ENCODE measurements at regions of chr22 and their contacts with region 1.

Region 1: DNA sequence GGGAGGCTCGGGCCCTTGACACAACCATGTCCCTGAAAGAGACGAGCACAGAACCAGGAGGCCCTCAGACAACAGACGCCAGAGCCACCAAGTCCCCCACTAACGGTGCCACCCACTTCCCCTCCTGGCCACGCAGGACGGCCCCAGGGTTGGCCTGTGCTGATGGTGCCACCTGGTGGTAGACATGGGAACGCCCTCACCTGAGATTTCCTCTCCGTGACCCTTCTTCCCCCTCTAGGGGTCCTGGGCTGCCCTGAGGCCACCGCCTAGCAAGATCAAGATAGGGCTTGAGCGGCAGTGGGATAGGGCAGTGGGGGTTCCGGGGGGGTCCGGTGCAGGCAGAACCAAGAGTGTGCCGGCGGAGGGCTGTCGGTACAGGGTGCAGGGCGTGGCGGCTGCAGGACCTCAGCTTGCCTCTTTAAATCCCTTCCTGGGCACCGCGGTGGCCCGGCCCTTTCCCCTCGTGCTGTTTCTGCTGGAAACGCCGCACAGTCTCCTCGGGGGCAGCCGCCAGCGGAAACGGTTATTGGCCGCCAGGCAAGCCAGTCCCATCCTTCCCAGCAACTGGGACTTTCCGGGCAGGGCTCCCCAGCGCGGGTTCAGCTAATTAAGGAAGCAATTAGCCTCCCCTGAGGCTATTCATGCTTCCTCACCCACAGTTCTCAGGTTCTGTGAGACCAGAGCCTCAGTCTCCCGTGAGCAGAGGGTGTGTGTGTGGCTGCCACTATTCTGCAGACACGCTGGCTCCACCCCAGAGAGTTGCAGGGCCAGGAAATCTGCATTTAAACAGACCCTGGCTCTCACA is 5.5 kb upstream of the NFAM1 start:
- DNase-seq: peak; percentile 76 to 87
- H3K4me3 ChIP-seq: peak overlapping the region; percentile 42
- H3K4me3 Mint-ChIP-seq: peak overlapping the region; percentile 71
- H3K27ac Mint-ChIP-seq: peak overlapping the region; percentile 53
- H3K4me1 ChIP-seq: no peaks in the 10 kb centered on the region
- H3K4me1 Mint-ChIP-seq: no peaks in the 10 kb centered on the region
- H3K27me3 ChIP-seq: no peaks in the 10 kb centered on the region
- H3K27me3 Mint-ChIP-seq: no peaks in the 10 kb centered on the region
- CTCF ChIP-seq: peak; percentile 95

Region 2: DNA sequence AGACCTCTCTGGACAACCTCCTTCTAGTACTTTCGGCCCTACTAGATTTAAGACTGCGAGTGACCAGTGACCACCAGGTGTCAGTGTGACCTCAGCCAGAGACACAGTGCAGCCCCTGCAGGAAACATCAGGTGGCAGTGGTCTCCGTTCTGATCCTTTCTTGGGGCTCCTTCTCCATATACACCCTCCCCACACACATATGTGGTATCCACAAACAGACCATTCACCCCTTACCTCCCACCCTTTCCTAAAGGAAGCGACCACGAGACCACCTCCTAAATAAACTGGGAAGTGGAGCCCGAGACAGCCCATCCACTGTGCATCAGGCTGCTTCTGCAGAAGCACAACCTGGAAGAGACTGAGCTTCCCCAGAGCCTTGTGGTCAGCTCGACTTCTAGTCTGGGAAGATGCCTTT is 268.6 kb before region 1 on chr22:
- CTCF ChIA-PET with region 1: no interaction called
- POLR2A ChIA-PET with region 1: no interaction called
- intact Hi-C with region 1: loop called (anchors 1 kb)
- DNase-seq: peak; percentile 77 to 82
- H3K4me3 ChIP-seq: no peak overlapping the region
- H3K4me3 Mint-ChIP-seq: no peak overlapping the region
- H3K27ac Mint-ChIP-seq: no peak overlapping the region
- H3K4me1 ChIP-seq: no peaks in the 10 kb centered on the region
- H3K4me1 Mint-ChIP-seq: no peaks in the 10 kb centered on the region
- H3K27me3 ChIP-seq: no peaks in the 10 kb centered on the region
- H3K27me3 Mint-ChIP-seq: no peaks in the 10 kb centered on the region
- CTCF ChIP-seq: peak; percentile 97 to 99

Region 3: DNA sequence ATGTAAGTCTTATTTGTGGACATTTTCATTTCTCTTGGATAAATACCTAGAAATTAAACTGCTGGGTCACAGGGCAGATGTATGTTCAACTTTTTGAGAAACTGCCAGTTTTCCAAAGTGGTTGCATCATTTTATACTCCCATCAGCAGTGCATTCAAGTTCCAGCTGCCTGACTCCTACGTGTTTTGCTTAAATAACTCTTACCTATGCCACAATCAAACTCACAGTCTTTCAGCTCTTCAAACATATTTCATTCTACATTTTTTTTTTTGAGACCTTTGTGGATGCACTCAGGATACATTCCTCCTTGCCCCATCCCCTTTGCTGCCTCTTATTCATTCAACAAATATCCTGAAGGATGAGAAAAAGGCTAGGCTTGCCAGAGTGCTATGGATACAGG is 176.4 kb before region 1 on chr22:
- CTCF ChIA-PET with region 1: no interaction called
- POLR2A ChIA-PET with region 1: no interaction called
- intact Hi-C with region 1: no loop called
- DNase-seq: no peak
- H3K4me3 ChIP-seq: no peak overlapping the region
- H3K4me3 Mint-ChIP-seq: no peak overlapping the region
- H3K27ac Mint-ChIP-seq: no peak overlapping the region
- H3K4me1 ChIP-seq: peaks cover 3% of the 10 kb centered on the region; the same call in 1 of the 2 replicates
- H3K4me1 Mint-ChIP-seq: peaks cover 35% of the 10 kb centered on the region
- H3K27me3 ChIP-seq: no peaks in the 10 kb centered on the region
- H3K27me3 Mint-ChIP-seq: no peaks in the 10 kb centered on the region
- CTCF ChIP-seq: no peak

Region 4: GRCh38 chr22:42277988-42278776 is 159.5 kb before region 1 on chr22:
- CTCF ChIA-PET with region 1: interaction called, 3 read pairs
- POLR2A ChIA-PET with region 1: no interaction called
- intact Hi-C with region 1: loop called (anchors 1 kb)
- DNase-seq: peak; percentile 75 to 78
- H3K4me3 ChIP-seq: no peak overlapping the region
- H3K4me3 Mint-ChIP-seq: no peak overlapping the region
- H3K27ac Mint-ChIP-seq: peak overlapping the region; percentile 55
- H3K4me1 ChIP-seq: peaks cover 52% of the 10 kb centered on the region
- H3K4me1 Mint-ChIP-seq: peaks cover 38% of the 10 kb centered on the region
- H3K27me3 ChIP-seq: no peaks in the 10 kb centered on the region
- H3K27me3 Mint-ChIP-seq: no peaks in the 10 kb centered on the region
- CTCF ChIP-seq: peak in 1 of 2 experiments; percentile 62

Region 5: GRCh38 chr22:42313804-42314581 is 123.7 kb before region 1 on chr22:
- CTCF ChIA-PET with region 1: interaction called, 7 read pairs
- POLR2A ChIA-PET with region 1: no interaction called
- intact Hi-C with region 1: loop called (anchors 1 kb)
- DNase-seq: peak; percentile 94 to 98
- H3K4me3 ChIP-seq: no peak overlapping the region
- H3K4me3 Mint-ChIP-seq: peak overlapping the region; percentile 52
- H3K27ac Mint-ChIP-seq: peak overlapping the region; percentile 95
- H3K4me1 ChIP-seq: peaks cover 61% of the 10 kb centered on the region
- H3K4me1 Mint-ChIP-seq: peaks cover 42% of the 10 kb centered on the region
- H3K27me3 ChIP-seq: no peaks in the 10 kb centered on the region
- H3K27me3 Mint-ChIP-seq: no peaks in the 10 kb centered on the region
- CTCF ChIP-seq: peak; percentile 67 to 91

Region 6: DNA sequence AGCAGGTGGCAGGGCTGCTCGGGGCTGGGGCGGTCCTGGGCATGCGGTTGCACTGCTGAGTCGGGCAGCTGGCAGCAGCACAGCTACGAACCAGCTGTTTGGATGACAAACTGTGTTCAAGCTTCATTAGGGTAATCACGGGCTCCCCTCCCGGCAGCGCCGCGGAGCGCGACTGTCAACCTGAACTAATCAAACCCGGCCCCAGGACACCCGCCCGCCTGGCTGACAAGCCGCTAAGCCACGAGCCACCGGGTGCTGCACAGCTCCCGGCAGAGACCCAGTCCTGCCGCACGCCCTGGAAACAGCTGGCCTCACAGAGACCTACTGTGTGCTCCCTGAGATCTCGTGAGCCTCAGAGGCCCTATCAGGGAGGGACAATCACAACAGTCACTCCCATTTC is 106.7 kb before region 1 on chr22:
- CTCF ChIA-PET with region 1: no interaction called
- POLR2A ChIA-PET with region 1: no interaction called
- intact Hi-C with region 1: no loop called
- DNase-seq: no peak
- H3K4me3 ChIP-seq: no peak overlapping the region
- H3K4me3 Mint-ChIP-seq: no peak overlapping the region
- H3K27ac Mint-ChIP-seq: no peak overlapping the region
- H3K4me1 ChIP-seq: no peaks in the 10 kb centered on the region
- H3K4me1 Mint-ChIP-seq: no peaks in the 10 kb centered on the region
- H3K27me3 ChIP-seq: no peaks in the 10 kb centered on the region
- H3K27me3 Mint-ChIP-seq: no peaks in the 10 kb centered on the region
- CTCF ChIP-seq: no peak

Region 7: DNA sequence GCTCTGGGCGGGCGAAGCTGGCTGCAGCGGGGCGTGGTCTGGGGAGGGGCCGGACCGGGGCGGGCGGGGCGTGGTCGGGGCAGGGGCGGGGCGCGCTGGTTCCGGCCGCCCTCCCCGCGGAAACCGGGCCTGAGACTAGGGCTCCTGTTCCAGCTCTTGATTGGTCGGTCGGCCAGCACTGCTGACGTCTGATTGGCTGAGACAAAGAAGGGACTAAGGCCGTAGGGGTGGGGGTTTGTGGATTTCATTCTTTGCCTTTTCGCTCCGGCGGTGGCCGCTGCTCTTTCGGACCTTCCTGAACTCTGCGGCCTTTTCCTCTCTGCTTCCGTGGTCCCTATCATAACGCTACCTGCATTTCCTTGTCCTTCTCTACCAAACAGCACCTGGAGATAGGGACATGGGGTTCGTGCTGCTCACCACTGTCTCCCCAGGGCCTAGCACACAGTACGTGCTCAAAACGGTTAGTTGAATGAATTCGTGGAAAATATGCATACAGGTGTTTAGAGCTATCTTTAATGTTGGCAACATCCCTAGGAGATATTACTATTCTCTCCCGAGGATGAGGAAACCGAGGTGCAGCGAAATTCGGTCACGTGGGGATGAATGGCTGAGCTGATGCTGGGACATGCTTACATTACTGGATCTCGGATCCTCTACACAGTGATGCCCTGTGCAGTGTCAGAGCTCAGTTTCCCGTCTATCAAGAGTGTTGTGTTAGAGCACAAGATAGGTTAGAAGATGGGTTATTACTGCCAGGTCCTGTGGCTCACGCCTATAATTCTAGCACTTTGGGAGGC is 68.2 kb before region 1 on chr22:
- CTCF ChIA-PET with region 1: interaction called, 4 read pairs
- POLR2A ChIA-PET with region 1: no interaction called
- intact Hi-C with region 1: loop called (anchors 5 kb)
- DNase-seq: peak; percentile 94 to 96
- H3K4me3 ChIP-seq: peak overlapping the region; percentile 93
- H3K4me3 Mint-ChIP-seq: peak overlapping the region; percentile 97
- H3K27ac Mint-ChIP-seq: peak overlapping the region; percentile 76
- H3K4me1 ChIP-seq: no peaks in the 10 kb centered on the region; the same call in 1 of the 2 replicates
- H3K4me1 Mint-ChIP-seq: peaks cover 16% of the 10 kb centered on the region
- H3K27me3 ChIP-seq: no peaks in the 10 kb centered on the region
- H3K27me3 Mint-ChIP-seq: no peaks in the 10 kb centered on the region
- CTCF ChIP-seq: no peak

Region 8: GRCh38 chr22:42379966-42380537 is 57.6 kb before region 1 on chr22:
- CTCF ChIA-PET with region 1: no interaction called
- POLR2A ChIA-PET with region 1: no interaction called
- intact Hi-C with region 1: loop called (anchors 5 kb)
- DNase-seq: no peak
- H3K4me3 ChIP-seq: no peak overlapping the region
- H3K4me3 Mint-ChIP-seq: no peak overlapping the region
- H3K27ac Mint-ChIP-seq: no peak overlapping the region
- H3K4me1 ChIP-seq: peaks cover 5% of the 10 kb centered on the region; the same call in 1 of the 2 replicates
- H3K4me1 Mint-ChIP-seq: peaks cover 15% of the 10 kb centered on the region
- H3K27me3 ChIP-seq: no peaks in the 10 kb centered on the region
- H3K27me3 Mint-ChIP-seq: no peaks in the 10 kb centered on the region
- CTCF ChIP-seq: no peak

Region 9: DNA sequence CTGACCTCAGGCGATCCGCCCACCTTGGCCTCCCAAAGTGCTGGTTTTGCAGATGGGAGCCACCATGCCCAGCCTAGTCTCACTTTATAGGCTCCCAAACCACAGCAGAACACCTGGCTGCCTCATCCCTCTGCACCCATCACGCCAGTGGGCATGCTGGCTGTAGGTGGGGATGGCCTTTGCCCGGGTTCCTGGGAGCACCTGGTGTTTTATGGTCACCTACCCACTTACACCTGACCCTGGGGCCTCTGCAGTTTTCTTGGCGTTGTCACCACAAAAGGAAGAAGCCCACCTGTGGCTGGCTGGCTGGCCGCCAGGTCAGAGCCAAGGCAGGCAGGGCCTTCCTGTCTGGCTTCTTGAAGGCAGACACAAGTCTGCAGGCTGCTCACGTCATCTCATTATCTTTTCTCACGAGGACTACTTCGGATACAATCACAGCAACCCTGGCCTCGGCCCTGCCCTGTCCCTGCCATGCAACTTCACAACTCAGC is 73.8 kb after region 1 on chr22:
- CTCF ChIA-PET with region 1: no interaction called
- POLR2A ChIA-PET with region 1: no interaction called
- intact Hi-C with region 1: no loop called
- DNase-seq: no peak
- H3K4me3 ChIP-seq: no peak overlapping the region
- H3K4me3 Mint-ChIP-seq: no peak overlapping the region
- H3K27ac Mint-ChIP-seq: no peak overlapping the region
- H3K4me1 ChIP-seq: no peaks in the 10 kb centered on the region
- H3K4me1 Mint-ChIP-seq: no peaks in the 10 kb centered on the region
- H3K27me3 ChIP-seq: no peaks in the 10 kb centered on the region
- H3K27me3 Mint-ChIP-seq: no peaks in the 10 kb centered on the region
- CTCF ChIP-seq: no peak

Measured in Caco-2 (cell line).